ENCODE measurements at regions of chr9 and their contacts with region 1.

Region 1: DNA sequence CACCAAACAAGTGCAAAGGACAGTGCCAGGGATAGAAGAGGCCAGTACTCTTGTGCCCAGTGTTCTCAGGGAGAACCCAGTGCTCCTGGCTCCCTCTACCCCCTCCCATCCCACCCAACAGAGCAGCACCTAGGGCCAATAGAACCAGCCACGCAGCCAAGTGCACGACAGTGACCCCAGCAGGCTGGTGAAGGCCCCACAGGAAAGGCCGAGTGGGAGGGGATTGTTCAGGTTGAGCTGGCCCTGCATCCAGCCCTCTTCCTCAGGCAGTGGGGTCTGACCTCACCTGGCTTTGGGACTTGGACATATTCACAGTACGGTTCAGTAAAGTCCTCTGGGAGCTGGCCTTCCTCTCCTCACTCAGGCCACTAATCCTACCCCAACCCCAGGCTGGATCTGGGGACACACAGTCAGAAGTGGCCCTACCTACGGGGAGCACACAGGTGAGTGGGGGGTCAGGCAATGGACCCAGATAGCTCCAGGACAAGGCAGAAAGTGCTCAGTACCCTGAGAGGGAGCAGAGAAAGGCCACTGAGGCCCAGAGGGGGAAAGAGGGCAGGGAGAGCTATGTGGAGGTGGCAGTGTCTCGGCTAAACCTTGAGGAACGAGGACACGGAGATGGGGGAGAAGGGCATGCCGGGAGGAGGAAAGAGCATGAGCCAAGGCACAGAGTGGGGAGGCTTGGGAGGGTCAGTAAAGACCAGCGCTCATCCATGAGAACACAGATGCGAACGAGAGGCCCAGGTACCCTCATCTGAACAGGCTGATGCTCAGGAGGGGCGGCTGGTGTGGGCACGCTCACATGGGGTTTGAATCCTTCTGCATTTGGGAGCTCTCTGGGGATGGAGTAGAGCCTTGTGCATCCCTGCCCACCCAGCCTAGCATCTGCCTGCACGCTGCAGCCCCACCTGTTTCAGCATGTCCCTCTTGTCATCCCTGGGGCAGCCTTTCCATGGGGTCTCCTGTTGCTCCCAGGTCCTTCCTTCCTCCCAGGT is 25.6 kb downstream of the POLR1E start:
- DNase-seq: peak; percentile 34 to 72
- H3K4me3 ChIP-seq: no peak overlapping the region
- H3K27ac ChIP-seq: no peak overlapping the region
- H3K4me1 ChIP-seq: no peaks in the 10 kb centered on the region; a peak in 2 of 7 replicates
- H3K27me3 ChIP-seq: no peaks in the 10 kb centered on the region
- CTCF ChIP-seq: peak; percentile 53 to 77 (median 76)
- EP300 ChIP-seq: no peak
- POLR2A ChIP-seq: peak in 1 of 2 experiments; percentile 49; a peak in 1 of 3 replicates
- RAD21 ChIP-seq: peak; percentile 36 to 45; a peak in 3 of 4 replicates

Region 2: DNA sequence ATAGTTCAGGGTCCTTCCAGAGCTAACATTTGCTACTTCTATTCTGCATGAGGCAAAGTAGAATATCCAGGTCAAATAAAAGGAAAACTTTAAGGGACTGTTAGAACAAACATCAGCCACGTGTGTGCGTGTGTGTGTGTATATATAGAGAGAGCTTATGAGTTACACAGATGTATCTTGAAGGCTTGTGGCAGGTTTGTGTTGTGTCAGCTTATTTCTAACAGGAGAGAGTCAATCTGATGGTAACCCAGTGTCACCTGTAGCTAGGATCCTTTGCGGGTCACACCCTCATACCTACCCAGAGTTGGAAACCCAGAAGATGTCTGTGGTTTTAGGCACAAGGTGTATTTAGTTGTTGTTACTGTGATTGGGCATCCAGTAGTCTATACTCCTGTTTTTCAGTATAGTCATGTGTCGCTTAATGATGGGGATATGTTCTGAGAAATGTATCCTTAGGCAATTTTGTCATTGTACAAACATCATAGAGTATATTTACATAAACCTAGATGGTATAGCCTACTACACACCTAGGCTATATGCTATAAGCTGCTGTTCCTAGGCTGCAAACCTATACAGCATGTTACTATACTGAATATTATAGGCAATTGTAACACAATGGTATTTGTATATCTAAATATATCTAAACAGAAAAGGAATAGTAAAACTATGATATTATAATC is 12.7 kb before region 1 on chr9:
- CTCF ChIA-PET with region 1: interaction called, 14 read pairs
- POLR2A ChIA-PET with region 1: interaction called, 8 read pairs
- DNase-seq: no peak
- H3K4me3 ChIP-seq: no peak overlapping the region
- H3K27ac ChIP-seq: no peak overlapping the region
- H3K4me1 ChIP-seq: no peaks in the 10 kb centered on the region
- H3K27me3 ChIP-seq: no peaks in the 10 kb centered on the region
- CTCF ChIP-seq: no peak
- EP300 ChIP-seq: no peak
- POLR2A ChIP-seq: no peak
- RAD21 ChIP-seq: no peak

Measured in H1 (cell line).